GM10248 (cell line): ENCODE measurements at regions of chr6 and their contacts with region 1.

Region 1: DNA sequence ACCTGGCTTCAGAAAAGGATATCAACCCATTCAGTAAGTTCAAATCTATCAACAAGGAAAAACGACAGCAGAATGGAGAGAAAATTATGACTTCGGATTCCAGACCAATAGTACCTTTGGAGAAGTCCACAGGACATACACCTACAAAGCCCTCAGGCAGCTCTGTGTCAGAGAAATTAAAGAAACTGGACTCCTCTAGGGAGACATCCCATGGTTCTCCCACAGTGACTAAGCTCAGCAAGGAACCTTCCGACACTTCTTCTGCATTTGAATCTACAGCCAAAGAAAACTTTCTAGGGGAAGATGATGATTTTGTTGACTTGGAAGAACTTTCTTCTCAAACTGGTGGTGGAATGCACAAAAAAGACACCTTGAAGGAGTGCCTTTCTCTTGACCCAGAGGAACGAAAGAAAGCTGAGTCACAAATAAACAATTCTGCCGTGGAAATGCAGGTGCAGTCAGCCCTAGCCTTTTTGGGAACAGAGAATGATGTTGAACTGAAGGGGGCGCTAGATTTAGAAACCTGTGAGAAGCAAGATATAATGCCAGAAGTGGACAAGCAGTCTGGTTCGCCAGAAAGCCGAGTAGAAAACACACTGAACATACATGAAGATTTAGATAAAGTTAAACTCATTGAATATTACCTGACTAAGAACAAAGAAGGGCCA is 67.4 kb upstream of the HINT3 start:
- DNase-seq: peak; percentile 15
- CTCF ChIP-seq: peak; percentile 36

Region 2: DNA sequence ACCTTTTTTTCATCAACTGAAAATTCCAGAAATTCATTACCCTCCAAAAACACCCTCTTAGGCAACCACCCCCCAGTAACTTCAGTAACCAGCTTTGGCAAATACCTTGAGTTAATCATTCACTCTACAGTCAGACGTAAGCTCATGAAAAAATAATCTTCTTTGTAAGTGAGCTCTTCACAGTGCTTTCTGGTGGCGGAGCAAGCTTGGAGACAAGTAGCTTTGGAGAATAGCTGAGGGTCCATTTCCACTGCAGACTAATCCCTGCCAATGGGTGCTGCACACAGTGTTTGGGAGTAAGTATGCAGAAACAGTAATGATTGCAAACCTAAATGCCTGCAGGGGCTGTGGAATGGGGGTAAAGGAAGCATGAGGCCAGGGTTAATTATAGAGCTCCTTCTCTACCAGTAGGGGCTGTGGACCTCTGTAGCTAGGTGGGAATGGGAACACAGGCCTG is 10.6 kb after region 1 on chr6:
- CTCF ChIA-PET with region 1: interaction called, 20 read pairs
- POLR2A ChIA-PET with region 1: no interaction called
- DNase-seq: no peak
- CTCF ChIP-seq: no peak